WTC11 (cell line): ENCODE measurements at regions of chr13 and their contacts with region 1.

Region 1: GRCh38 chr13:29503041-29503837 is 92.2 kb downstream of the SLC7A1 start:
- DNase-seq: peak; percentile 70
- ATAC-seq: peak; percentile 76
- H3K4me3 Mint-ChIP-seq: peak overlapping the region; percentile 58
- H3K27ac Mint-ChIP-seq: no peak overlapping the region
- H3K4me1 Mint-ChIP-seq: peaks cover 14% of the 10 kb centered on the region; the same call in 1 of the 2 replicates
- H3K27me3 Mint-ChIP-seq: peaks cover 4% of the 10 kb centered on the region; the same call in 1 of the 2 replicates
- CTCF ChIP-seq: no peak

Region 2: DNA sequence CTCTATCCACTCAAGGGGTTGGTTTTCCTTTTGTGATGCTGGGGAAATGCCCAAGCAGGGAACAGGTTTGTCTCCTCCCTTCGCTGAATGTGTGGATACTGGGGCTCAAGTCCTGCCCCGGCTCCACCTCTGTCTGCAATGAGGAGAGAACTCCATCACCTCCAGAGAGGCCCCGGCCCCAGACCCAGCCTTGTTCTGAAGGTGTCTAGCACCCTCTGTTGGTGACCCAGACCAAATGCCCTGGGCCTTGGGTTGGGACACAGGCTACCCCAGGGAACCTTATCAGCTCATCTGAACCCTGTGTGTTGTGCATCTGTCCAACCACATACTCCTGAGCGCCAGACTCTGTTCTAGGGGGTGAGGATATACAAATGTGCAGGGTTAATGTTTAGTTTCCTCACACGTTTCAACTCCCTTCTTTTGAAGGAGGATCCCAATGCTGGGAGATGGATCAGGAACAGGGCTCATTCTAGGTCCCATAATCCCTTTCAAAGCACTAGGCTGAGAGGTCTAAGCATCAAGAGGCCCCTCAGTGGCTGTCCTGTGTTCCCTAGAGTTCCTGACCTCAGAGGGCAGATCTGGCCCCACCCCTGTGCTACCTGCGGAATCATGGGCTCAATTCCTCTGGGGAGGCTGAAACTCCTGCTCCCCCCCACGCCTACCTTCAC is 204.8 kb after region 1 on chr13:
- CTCF ChIA-PET with region 1: interaction called, 66 read pairs
- POLR2A ChIA-PET with region 1: no interaction called
- DNase-seq: peak; percentile 81
- ATAC-seq: peak; percentile 97
- H3K4me3 Mint-ChIP-seq: no peak overlapping the region
- H3K27ac Mint-ChIP-seq: no peak overlapping the region
- H3K4me1 Mint-ChIP-seq: peaks cover 12% of the 10 kb centered on the region
- H3K27me3 Mint-ChIP-seq: no peaks in the 10 kb centered on the region; the same call in 1 of the 2 replicates
- CTCF ChIP-seq: peak; percentile 76